ENCODE measurements at regions of chr5 and their contacts with region 1.

Region 1: DNA sequence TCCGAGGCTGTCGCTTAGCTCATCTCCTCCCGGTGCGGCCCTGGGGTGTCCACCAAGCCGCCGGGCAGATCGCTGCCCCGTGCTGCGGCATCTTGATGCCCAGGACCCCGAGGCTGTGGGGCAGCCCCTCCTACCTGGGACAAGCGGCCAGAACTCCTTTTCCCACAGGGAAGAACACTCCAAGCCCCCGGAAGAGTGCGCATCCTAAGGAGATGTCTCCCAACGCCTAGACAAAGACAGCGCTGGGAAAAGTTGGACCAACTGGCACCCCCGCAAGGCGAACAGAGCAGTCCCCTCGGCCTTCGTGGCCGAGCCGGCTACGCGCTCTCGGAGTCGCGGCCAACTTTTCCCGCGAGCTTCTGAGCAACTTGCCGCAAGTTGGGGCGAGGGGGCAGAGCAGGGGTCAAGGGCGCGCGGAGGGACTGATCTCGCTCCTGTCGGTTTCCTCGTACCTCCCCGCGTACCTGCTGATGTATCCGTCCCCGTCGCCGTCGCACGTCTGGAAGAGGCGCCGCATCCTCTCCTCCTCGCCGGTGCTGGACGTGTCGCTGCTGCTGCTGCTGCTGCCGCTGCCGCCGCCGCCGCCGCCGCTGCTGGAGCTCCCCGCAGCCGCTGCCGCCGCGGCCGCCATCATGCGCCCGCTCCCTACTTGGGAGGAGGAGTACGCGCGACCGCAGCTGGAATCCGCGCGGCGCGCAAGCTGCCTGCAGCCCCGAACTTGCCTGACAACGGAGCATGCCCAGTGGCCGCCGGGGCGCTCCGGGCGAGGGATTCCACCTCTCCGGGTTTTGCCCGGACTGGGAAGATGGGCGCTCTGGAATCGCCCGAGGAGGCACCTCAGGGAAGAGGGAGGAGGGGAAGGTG is at the start of gene MCC:
- DNase-seq: peak; percentile 93
- H3K4me3 ChIP-seq: peak within 1 kb of the TSS; percentile 52 to 88 (median 75)
- H3K27ac ChIP-seq: peak within 1 kb of the TSS; percentile 74
- H3K4me1 ChIP-seq: peaks cover 19% of the 10 kb centered on the region
- H3K27me3 ChIP-seq: no peaks in the 10 kb centered on the region
- CTCF ChIP-seq: no peak
- total RNA-seq, gene MCC: 46.2 to 77.3 TPM

Region 2: GRCh38 chr5:113166852-113167366 is 321.1 kb before region 1 on chr5:
- CTCF ChIA-PET with region 1: no interaction called
- dilution Hi-C with region 1: no loop called
- in situ Hi-C with region 1: no loop called
- intact Hi-C with region 1: loop called (anchors 1 kb)
- DNase-seq: peak; percentile 97
- H3K4me3 ChIP-seq: no peak overlapping the region
- H3K27ac ChIP-seq: peak overlapping the region; percentile 74
- H3K4me1 ChIP-seq: peaks cover 75% of the 10 kb centered on the region
- H3K27me3 ChIP-seq: no peaks in the 10 kb centered on the region
- CTCF ChIP-seq: no peak

Region 3: GRCh38 chr5:113344973-113345940 is 142.8 kb before region 1 on chr5:
- CTCF ChIA-PET with region 1: no interaction called
- dilution Hi-C with region 1: no loop called
- in situ Hi-C with region 1: no loop called
- intact Hi-C with region 1: loop called (anchors 1 kb)
- DNase-seq: peak; percentile 98
- H3K4me3 ChIP-seq: no peak overlapping the region
- H3K27ac ChIP-seq: peak overlapping the region; percentile 68
- H3K4me1 ChIP-seq: peaks cover 34% of the 10 kb centered on the region
- H3K27me3 ChIP-seq: no peaks in the 10 kb centered on the region
- CTCF ChIP-seq: peak; percentile 19 to 31

Region 4: GRCh38 chr5:113427871-113428574 is 60.0 kb before region 1 on chr5:
- CTCF ChIA-PET with region 1: no interaction called
- dilution Hi-C with region 1: no loop called
- in situ Hi-C with region 1: no loop called
- intact Hi-C with region 1: loop called (anchors 1 kb)
- DNase-seq: peak; percentile 93
- H3K4me3 ChIP-seq: peak overlapping the region in 1 of 3 experiments; percentile 29
- H3K27ac ChIP-seq: peak overlapping the region; percentile 79
- H3K4me1 ChIP-seq: peaks cover 37% of the 10 kb centered on the region
- H3K27me3 ChIP-seq: no peaks in the 10 kb centered on the region
- CTCF ChIP-seq: peak; percentile 27 to 38

Region 5: DNA sequence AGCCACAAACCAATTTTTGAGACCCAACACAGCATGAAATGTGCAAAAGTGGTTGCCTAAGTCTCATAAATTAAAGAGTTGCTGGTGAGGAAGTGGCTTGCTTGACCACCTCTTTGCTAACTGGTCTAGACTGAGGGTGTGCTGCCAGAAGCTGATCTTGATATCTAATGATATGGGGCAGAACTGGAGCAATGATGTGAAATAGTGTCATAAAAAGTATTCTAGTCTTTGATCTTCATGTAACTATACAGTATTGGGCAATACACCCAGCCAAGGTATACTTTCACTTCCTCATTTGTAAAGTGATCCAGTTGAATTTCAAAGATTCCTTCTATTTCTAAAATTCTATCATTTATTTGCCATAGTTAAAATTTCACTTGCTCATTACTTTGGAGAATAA is 19.6 kb after region 1 on chr5:
- CTCF ChIA-PET with region 1: no interaction called
- dilution Hi-C with region 1: no loop called
- in situ Hi-C with region 1: no loop called
- intact Hi-C with region 1: loop called (anchors 1 kb)
- DNase-seq: no peak
- H3K4me3 ChIP-seq: no peak overlapping the region
- H3K27ac ChIP-seq: no peak overlapping the region
- H3K4me1 ChIP-seq: peaks cover 32% of the 10 kb centered on the region
- H3K27me3 ChIP-seq: no peaks in the 10 kb centered on the region
- CTCF ChIP-seq: no peak